Activated T-helper 2 cell treated with anti-CD3 and anti-CD28 coated beads, Interferon-gamma antibody, Interleukin-2, Interleukin-4, amounts not matched to agents 10 μg/mL and 5 μg/mL and 100 μg/mL, durations not matched to agents 14 hours and 24 hours and 36 hours (primary cell): ENCODE measurements at regions of chr22 and their contacts with region 1.

Region 1: DNA sequence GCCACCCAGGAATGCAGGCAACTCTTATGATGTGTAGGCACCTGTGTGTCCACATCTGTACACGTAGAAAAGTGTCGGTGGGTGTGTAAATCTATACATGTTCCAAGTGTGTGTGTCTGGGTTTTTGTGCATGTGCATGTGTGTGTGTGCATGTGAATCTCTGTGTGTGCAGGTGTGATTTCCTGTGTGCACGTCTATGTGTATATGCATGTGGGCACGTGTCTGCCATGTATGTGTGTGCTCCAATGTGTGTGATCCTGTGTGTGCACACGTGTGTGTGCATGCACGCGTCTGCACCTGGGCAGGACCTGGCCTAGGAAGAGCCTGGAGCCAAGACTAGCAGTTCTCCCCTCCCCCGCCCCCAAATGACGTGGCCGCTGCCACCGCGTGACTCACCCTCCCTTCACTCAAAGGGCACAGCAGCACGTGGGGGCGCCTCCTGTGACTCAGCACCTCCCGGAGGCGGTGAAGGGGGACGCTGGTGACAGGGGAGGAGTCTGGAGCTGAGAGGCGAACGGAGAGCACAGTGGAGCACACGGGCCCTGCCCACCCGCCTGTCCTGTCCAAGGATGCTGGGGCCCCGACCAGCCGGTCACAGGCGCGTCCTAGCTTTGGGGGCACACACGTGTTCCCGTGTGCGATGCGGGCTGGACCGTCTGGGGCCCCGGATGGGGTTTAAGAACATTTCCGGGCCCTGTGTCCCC is 10.1 kb downstream of the PIM3 start:
- DNase-seq: peak; percentile 90
- H3K4me3 Mint-ChIP-seq: peak overlapping the region; percentile 77
- H3K27ac Mint-ChIP-seq: peak overlapping the region; percentile 88
- H3K4me1 Mint-ChIP-seq: peaks cover 19% of the 10 kb centered on the region
- H3K27me3 Mint-ChIP-seq: no peaks in the 10 kb centered on the region

Region 2: GRCh38 chr22:49936018-49936952 is 34.4 kb before region 1 on chr22:
- intact Hi-C with region 1: loop called (anchors 2 kb)
- DNase-seq: peak; percentile 90
- H3K4me3 Mint-ChIP-seq: peak overlapping the region; percentile 52
- H3K27ac Mint-ChIP-seq: peak overlapping the region; percentile 83
- H3K4me1 Mint-ChIP-seq: peaks cover 20% of the 10 kb centered on the region
- H3K27me3 Mint-ChIP-seq: no peaks in the 10 kb centered on the region

Region 3: GRCh38 chr22:50016988-50017700 is 46.5 kb after region 1 on chr22:
- intact Hi-C with region 1: loop called (anchors 2 kb)
- DNase-seq: no peak
- H3K4me3 Mint-ChIP-seq: no peak overlapping the region
- H3K27ac Mint-ChIP-seq: peak overlapping the region; percentile 52
- H3K4me1 Mint-ChIP-seq: peaks cover 25% of the 10 kb centered on the region
- H3K27me3 Mint-ChIP-seq: peaks cover 3% of the 10 kb centered on the region

Region 4: DNA sequence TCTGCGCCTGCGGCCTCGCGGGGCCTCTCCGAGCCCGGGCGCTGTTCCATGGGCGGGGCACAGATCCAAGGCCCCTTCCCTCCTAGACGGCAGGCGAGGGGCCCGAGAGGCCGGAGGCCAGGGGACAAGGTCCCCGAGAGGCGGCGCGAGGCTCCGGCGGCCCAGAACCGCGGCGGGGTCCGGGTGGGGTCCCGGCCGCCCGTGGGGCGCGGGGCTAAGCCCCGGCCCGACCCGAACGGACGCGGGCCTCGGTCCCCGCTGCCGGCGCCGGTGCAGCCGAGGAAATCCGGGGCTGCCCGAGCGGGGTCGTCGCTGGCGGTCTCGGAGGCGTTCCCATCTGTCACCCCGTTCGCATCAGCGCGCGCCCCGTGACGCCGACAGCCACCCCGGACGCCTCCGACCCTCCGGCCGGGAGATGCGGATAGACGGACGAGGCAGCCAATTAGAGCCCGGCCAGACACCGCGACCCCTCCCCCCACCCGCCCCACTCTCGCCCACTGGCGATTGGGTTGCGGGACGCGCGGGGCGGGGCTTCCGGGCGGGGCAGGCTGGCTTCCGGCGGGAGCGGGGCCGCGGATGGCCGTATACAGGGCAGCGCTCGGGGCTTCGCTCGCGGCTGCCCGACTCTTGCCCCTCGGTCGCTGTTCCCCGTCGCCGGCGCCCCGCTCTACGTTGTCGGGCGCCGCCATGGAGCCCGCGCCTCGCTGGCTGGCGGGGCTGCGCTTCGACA is 229.9 kb after region 1 on chr22 and contains the start of gene SELENOO:
- intact Hi-C with region 1: loop called (anchors 2 kb)
- DNase-seq: peak; percentile 88
- H3K4me3 Mint-ChIP-seq: peak within 1 kb of the TSS; percentile 83
- H3K27ac Mint-ChIP-seq: peak within 1 kb of the TSS; percentile 60
- H3K4me1 Mint-ChIP-seq: peaks cover 9% of the 10 kb centered on the region
- H3K27me3 Mint-ChIP-seq: no peaks in the 10 kb centered on the region
- total RNA-seq, gene SELENOO: 26.3 and 26.4 TPM in 2 replicates